ENCODE measurements at regions of chr6 and their contacts with region 1.

Region 1: GRCh38 chr6:170529839-170530469 is 23.2 kb downstream of the PSMB1 start:
- DNase-seq: peak; percentile 38 to 73 (median 49)
- H3K4me3 ChIP-seq: no peak overlapping the region
- H3K4me3 Mint-ChIP-seq: peak overlapping the region in 1 of 7 donors; percentile 13
- H3K27ac ChIP-seq: no peak overlapping the region
- H3K27ac Mint-ChIP-seq: peak overlapping the region in 2 of 8 donors; percentile 42 to 72
- H3K4me1 ChIP-seq: no peaks in the 10 kb centered on the region
- H3K4me1 Mint-ChIP-seq: no peaks in the 10 kb centered on the region
- H3K27me3 ChIP-seq: no peaks in the 10 kb centered on the region
- H3K27me3 Mint-ChIP-seq: peaks cover 0 to 1% of the 10 kb centered on the region in 2 donors

Region 2: DNA sequence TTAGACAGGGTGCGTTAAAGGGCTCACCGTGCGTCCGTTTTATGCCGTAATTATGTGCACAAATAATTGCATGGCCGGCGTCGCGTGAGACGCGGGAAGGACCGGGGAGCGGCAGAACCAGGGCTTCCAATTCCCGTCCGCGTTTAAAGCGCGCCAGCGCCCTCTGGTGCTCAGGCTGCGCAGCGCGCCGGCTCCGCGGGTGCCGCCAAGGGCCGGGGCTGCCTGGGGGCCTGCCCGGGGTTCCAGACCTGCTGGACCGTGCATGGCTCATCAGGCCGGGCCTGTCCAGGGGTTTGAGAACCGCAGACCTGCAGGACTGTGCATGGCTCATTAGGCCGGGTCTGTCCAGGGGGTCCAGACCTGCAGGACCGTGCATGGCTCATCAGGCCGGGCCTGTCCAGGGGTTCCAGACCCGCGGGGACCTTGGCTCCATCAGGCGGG is 1645.3 kb before region 1 on chr6:
- CTCF ChIA-PET with region 1: no interaction called
- POLR2A ChIA-PET with region 1: no interaction called
- DNase-seq: peak; percentile 49 to 79 (median 77)
- H3K4me3 ChIP-seq: peak overlapping the region; percentile 81
- H3K4me3 Mint-ChIP-seq: peak overlapping the region; percentile 87 to 91 (median 89)
- H3K27ac ChIP-seq: peak overlapping the region; percentile 63
- H3K27ac Mint-ChIP-seq: peak overlapping the region; percentile 70 to 97 (median 90)
- H3K4me1 ChIP-seq: peaks cover 9% of the 10 kb centered on the region
- H3K4me1 Mint-ChIP-seq: peaks cover 10 to 15% (median 14%) of the 10 kb centered on the region in 3 donors
- H3K27me3 ChIP-seq: no peaks in the 10 kb centered on the region
- H3K27me3 Mint-ChIP-seq: peaks cover 0 to 1% of the 10 kb centered on the region in 2 donors

Region 3: DNA sequence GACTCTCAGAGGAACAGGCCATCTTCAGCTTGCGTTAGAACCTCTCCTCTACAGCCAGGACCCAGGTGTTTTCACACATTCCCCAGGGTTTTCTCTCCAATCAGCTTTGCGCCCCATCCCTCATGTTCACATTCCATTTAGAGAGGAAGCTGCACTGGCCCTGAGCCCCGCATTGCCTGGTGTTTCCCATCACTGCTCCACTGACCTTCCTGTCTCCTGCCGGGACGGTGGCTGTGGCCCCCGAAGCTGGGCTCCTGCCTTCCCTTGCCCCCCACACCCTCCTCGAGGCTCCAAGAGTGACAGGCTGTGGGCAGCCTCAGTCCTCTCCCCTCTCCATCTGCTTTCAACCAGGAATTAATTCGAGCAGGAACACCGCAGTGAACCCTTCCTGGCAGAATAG is 1633.6 kb before region 1 on chr6:
- CTCF ChIA-PET with region 1: interaction called, 10 read pairs
- POLR2A ChIA-PET with region 1: no interaction called
- DNase-seq: no peak
- H3K4me3 ChIP-seq: no peak overlapping the region
- H3K4me3 Mint-ChIP-seq: peak overlapping the region in 3 of 7 donors; percentile 42 to 64 (median 56)
- H3K27ac ChIP-seq: no peak overlapping the region
- H3K27ac Mint-ChIP-seq: peak overlapping the region in 3 of 8 donors; percentile 11 to 56 (median 29)
- H3K4me1 ChIP-seq: peaks cover 6% of the 10 kb centered on the region
- H3K4me1 Mint-ChIP-seq: peaks cover 14 to 26% (median 16%) of the 10 kb centered on the region in 3 donors
- H3K27me3 ChIP-seq: no peaks in the 10 kb centered on the region
- H3K27me3 Mint-ChIP-seq: peaks cover 0 to 6% of the 10 kb centered on the region in 2 donors

Region 4: GRCh38 chr6:169831450-169832246 is 698.3 kb before region 1 on chr6:
- CTCF ChIA-PET with region 1: interaction called, 12 read pairs
- POLR2A ChIA-PET with region 1: no interaction called
- DNase-seq: peak; percentile 49 to 72 (median 53)
- H3K4me3 ChIP-seq: no peak overlapping the region
- H3K4me3 Mint-ChIP-seq: no peak overlapping the region
- H3K27ac ChIP-seq: no peak overlapping the region
- H3K27ac Mint-ChIP-seq: no peak overlapping the region
- H3K4me1 ChIP-seq: no peaks in the 10 kb centered on the region
- H3K4me1 Mint-ChIP-seq: peaks cover 2 to 5% (median 3%) of the 10 kb centered on the region in 3 donors
- H3K27me3 ChIP-seq: peaks cover 14% of the 10 kb centered on the region
- H3K27me3 Mint-ChIP-seq: peaks cover 16 to 59% of the 10 kb centered on the region in 2 donors

Region 5: GRCh38 chr6:170505306-170505705 is 24.6 kb before region 1 on chr6:
- CTCF ChIA-PET with region 1: no interaction called
- POLR2A ChIA-PET with region 1: no interaction called
- DNase-seq: no peak
- H3K4me3 ChIP-seq: no peak overlapping the region
- H3K4me3 Mint-ChIP-seq: no peak overlapping the region
- H3K27ac ChIP-seq: no peak overlapping the region
- H3K27ac Mint-ChIP-seq: no peak overlapping the region
- H3K4me1 ChIP-seq: no peaks in the 10 kb centered on the region
- H3K4me1 Mint-ChIP-seq: no peaks in the 10 kb centered on the region
- H3K27me3 ChIP-seq: peaks cover 11% of the 10 kb centered on the region
- H3K27me3 Mint-ChIP-seq: peaks cover 22 to 49% of the 10 kb centered on the region in 2 donors

Region 6: GRCh38 chr6:170542031-170542719 is 12.2 kb after region 1 on chr6:
- CTCF ChIA-PET with region 1: interaction called, 13 read pairs
- POLR2A ChIA-PET with region 1: no interaction called
- DNase-seq: no peak
- H3K4me3 ChIP-seq: no peak overlapping the region
- H3K4me3 Mint-ChIP-seq: no peak overlapping the region
- H3K27ac ChIP-seq: no peak overlapping the region
- H3K27ac Mint-ChIP-seq: peak overlapping the region in 1 of 8 donors; percentile 17
- H3K4me1 ChIP-seq: no peaks in the 10 kb centered on the region
- H3K4me1 Mint-ChIP-seq: peaks cover 29 to 49% (median 48%) of the 10 kb centered on the region in 3 donors
- H3K27me3 ChIP-seq: no peaks in the 10 kb centered on the region
- H3K27me3 Mint-ChIP-seq: no peaks in the 10 kb centered on the region